Naive thymus-derived CD4-positive, alpha-beta T cell (primary cell): ENCODE measurements at regions of chr3 and their contacts with region 1.

Region 1: GRCh38 chr3:126475413-126476114 is at the start of gene ZXDC:
- DNase-seq: peak; percentile 85 to 95 (median 90)
- ATAC-seq: peak; percentile 89
- H3K4me3 ChIP-seq: peak within 1 kb of the TSS; percentile 89
- H3K4me3 Mint-ChIP-seq: peak within 1 kb of the TSS; percentile 81 to 97 (median 92)
- H3K27ac ChIP-seq: peak within 1 kb of the TSS; percentile 87
- H3K27ac Mint-ChIP-seq: peak within 1 kb of the TSS; percentile 82 to 96 (median 92)
- H3K4me1 ChIP-seq: peaks cover 29 to 34% of the 10 kb centered on the region in 2 donors
- H3K4me1 Mint-ChIP-seq: peaks cover 34 to 52% (median 48%) of the 10 kb centered on the region in 7 donors
- H3K27me3 ChIP-seq: no peaks in the 10 kb centered on the region
- H3K27me3 Mint-ChIP-seq: peaks cover 0 to 4% (median 0%) of the 10 kb centered on the region in 5 donors
- total RNA-seq, gene ZXDC: 33.7 to 71.9 (median 67.6) TPM

Region 2: GRCh38 chr3:124730129-124730940 is 1745.2 kb before region 1 on chr3 and contains the start of gene UMPS:
- CTCF ChIA-PET with region 1: no interaction called
- POLR2A ChIA-PET with region 1: interaction called, 3 read pairs
- intact Hi-C with region 1: loop called in 1 of 2 experiments (anchors 5 kb)
- DNase-seq: peak; percentile 85 to 94 (median 91)
- ATAC-seq: peak; percentile 97
- H3K4me3 ChIP-seq: peak within 1 kb of the TSS; percentile 78
- H3K4me3 Mint-ChIP-seq: peak within 1 kb of the TSS; percentile 93 to 100 (median 98)
- H3K27ac ChIP-seq: peak within 1 kb of the TSS; percentile 77
- H3K27ac Mint-ChIP-seq: peak within 1 kb of the TSS; percentile 96 to 100 (median 98)
- H3K4me1 ChIP-seq: peaks cover 11 to 32% of the 10 kb centered on the region in 2 donors
- H3K4me1 Mint-ChIP-seq: peaks cover 20 to 51% (median 48%) of the 10 kb centered on the region in 7 donors
- H3K27me3 ChIP-seq: peaks cover 0 to 4% of the 10 kb centered on the region in 2 donors
- H3K27me3 Mint-ChIP-seq: peaks cover 9 to 27% (median 19%) of the 10 kb centered on the region in 5 donors
- total RNA-seq, gene UMPS: 13.2 to 34.8 (median 24.8) TPM

Region 3: DNA sequence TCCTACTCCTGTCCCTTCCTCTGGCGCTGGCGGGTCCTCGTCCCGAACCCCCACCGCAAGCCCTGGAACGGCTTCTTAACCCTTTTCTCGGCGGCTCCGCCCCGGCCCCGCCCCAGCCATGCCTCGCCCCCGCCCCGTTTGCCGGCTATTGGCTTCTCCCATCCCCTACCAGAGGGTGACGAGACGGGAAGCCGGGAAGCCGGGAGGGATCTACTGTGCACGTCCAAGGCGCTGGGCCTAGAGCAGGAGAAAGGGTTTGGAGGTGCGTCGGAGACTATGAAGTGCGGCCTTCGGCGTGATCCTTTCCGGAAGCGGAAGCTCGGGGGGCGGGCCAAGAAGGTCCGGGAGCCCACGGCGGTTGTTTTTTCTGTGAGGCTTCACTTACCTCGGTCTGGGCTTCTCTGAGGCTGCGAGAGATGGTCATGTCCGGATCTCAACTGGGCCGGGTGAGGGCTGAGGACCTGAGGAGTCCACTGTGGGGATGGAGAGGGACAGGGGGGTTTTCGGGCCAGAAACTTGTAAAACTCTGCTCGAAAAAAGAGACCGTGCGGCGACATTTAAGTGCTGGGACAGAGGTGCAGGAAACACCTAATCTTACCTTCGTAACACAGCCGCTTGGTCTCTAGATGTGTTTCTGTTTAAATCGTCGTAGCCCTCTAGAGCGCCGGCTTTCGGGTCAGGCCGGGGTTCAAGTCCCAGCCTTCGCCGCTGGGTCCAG is 485.2 kb before region 1 on chr3:
- CTCF ChIA-PET with region 1: no interaction called
- POLR2A ChIA-PET with region 1: no interaction called
- intact Hi-C with region 1: loop called (anchors 1 to 2 kb)
- DNase-seq: peak in 8 of 9 donors; percentile 57 to 84 (median 73)
- ATAC-seq: peak; percentile 91
- H3K4me3 ChIP-seq: peak overlapping the region; percentile 80
- H3K4me3 Mint-ChIP-seq: peak overlapping the region; percentile 95 to 100 (median 98)
- H3K27ac ChIP-seq: peak overlapping the region; percentile 82
- H3K27ac Mint-ChIP-seq: peak overlapping the region; percentile 92 to 100 (median 98)
- H3K4me1 ChIP-seq: peaks cover 5 to 7% of the 10 kb centered on the region in 2 donors
- H3K4me1 Mint-ChIP-seq: peaks cover 10 to 41% (median 25%) of the 10 kb centered on the region in 7 donors
- H3K27me3 ChIP-seq: no peaks in the 10 kb centered on the region
- H3K27me3 Mint-ChIP-seq: peaks cover 0 to 23% (median 0%) of the 10 kb centered on the region in 5 donors

Region 4: GRCh38 chr3:126245811-126246727 is 229.5 kb before region 1 on chr3:
- CTCF ChIA-PET with region 1: no interaction called
- POLR2A ChIA-PET with region 1: no interaction called
- intact Hi-C with region 1: loop called in 1 of 2 experiments (anchors 1 kb)
- DNase-seq: no peak
- ATAC-seq: no peak
- H3K4me3 ChIP-seq: no peak overlapping the region
- H3K4me3 Mint-ChIP-seq: no peak overlapping the region
- H3K27ac ChIP-seq: no peak overlapping the region
- H3K27ac Mint-ChIP-seq: no peak overlapping the region
- H3K4me1 ChIP-seq: no peaks in the 10 kb centered on the region
- H3K4me1 Mint-ChIP-seq: no peaks in the 10 kb centered on the region
- H3K27me3 ChIP-seq: no peaks in the 10 kb centered on the region
- H3K27me3 Mint-ChIP-seq: peaks cover 3 to 33% (median 17%) of the 10 kb centered on the region in 5 donors

Region 5: GRCh38 chr3:126654571-126655383 is 179.2 kb after region 1 on chr3 and contains the start of gene TXNRD3:
- CTCF ChIA-PET with region 1: no interaction called
- POLR2A ChIA-PET with region 1: no interaction called
- intact Hi-C with region 1: loop called in 1 of 2 experiments (anchors 2 kb)
- DNase-seq: peak; percentile 52 to 76 (median 71)
- ATAC-seq: peak; percentile 93
- H3K4me3 ChIP-seq: peak within 1 kb of the TSS; percentile 46
- H3K4me3 Mint-ChIP-seq: peak within 1 kb of the TSS; percentile 83 to 93 (median 89)
- H3K27ac ChIP-seq: peak within 1 kb of the TSS; percentile 51
- H3K27ac Mint-ChIP-seq: peak within 1 kb of the TSS in 7 of 9 donors; percentile 18 to 91 (median 51)
- H3K4me1 ChIP-seq: peaks cover 0 to 3% of the 10 kb centered on the region in 2 donors
- H3K4me1 Mint-ChIP-seq: peaks cover 4 to 19% (median 10%) of the 10 kb centered on the region in 7 donors
- H3K27me3 ChIP-seq: peaks cover 0 to 4% of the 10 kb centered on the region in 2 donors
- H3K27me3 Mint-ChIP-seq: peaks cover 0 to 51% (median 4%) of the 10 kb centered on the region in 5 donors
- total RNA-seq, gene TXNRD3: 0.46 to 4.8 (median 3.2) TPM

Region 6: DNA sequence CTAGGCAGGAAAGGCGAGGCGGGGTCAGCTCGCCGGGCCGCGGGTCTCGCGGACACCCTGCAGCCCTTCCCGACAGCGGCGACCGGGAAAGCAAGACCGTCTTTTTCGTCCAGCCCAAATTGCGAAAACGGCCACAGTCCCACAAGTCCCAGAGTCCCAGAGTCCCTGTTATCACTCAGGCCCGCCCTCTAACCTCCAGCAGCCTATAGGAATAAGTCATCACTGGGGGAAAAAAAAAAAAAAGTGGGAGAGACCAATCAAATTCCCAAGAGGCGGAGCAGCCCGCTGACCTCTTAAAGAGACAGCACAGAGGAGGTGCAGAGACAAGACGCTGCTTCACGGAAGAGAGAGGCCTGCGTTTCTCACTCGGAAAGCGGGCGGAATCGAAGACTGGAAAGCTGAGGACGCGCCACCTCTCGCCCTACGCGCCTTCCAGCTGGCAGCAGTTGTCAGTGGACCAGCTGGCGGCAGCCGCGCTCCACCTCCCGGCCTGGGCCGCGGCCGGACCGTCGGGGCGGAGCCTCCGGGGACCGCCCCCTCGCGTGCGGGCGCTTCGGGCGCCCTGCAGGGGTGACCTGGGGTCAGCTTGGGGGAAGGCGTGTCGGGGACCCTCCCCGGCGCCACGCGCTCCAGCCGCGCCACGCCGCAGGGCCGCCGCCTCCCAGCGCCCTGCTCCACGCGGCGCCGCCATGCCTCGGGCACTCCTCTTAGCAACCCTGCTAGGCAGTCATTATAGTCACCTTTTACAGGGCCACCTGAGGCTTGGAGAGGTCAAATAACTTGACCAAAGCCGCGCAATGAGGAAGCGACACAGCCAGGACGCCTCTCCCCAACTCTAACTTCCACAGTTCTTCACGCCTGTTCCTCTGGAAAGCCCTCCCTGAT is 1115.3 kb after region 1 on chr3 and contains the start of gene TPRA1:
- CTCF ChIA-PET with region 1: no interaction called
- POLR2A ChIA-PET with region 1: interaction called, 3 read pairs
- intact Hi-C with region 1: loop called (anchors 1 to 2 kb)
- DNase-seq: peak; percentile 58 to 90 (median 85)
- ATAC-seq: peak; percentile 90
- H3K4me3 ChIP-seq: peak within 1 kb of the TSS; percentile 91
- H3K4me3 Mint-ChIP-seq: peak within 1 kb of the TSS; percentile 86 to 99 (median 96)
- H3K27ac ChIP-seq: peak within 1 kb of the TSS; percentile 80
- H3K27ac Mint-ChIP-seq: peak within 1 kb of the TSS; percentile 86 to 96 (median 94)
- H3K4me1 ChIP-seq: peaks cover 11 to 12% of the 10 kb centered on the region in 2 donors
- H3K4me1 Mint-ChIP-seq: peaks cover 14 to 51% (median 43%) of the 10 kb centered on the region in 7 donors
- H3K27me3 ChIP-seq: no peaks in the 10 kb centered on the region
- H3K27me3 Mint-ChIP-seq: no peaks in the 10 kb centered on the region
- total RNA-seq, gene TPRA1: 13.6 to 30.6 (median 24.5) TPM

Region 7: GRCh38 chr3:128123538-128124368 is 1648.2 kb after region 1 on chr3 and contains the start of gene RUVBL1:
- CTCF ChIA-PET with region 1: no interaction called
- POLR2A ChIA-PET with region 1: no interaction called
- intact Hi-C with region 1: loop called in 1 of 2 experiments (anchors 5 kb)
- DNase-seq: peak; percentile 85 to 99 (median 98)
- ATAC-seq: peak; percentile 97
- H3K4me3 ChIP-seq: peak within 1 kb of the TSS; percentile 83
- H3K4me3 Mint-ChIP-seq: peak within 1 kb of the TSS; percentile 82 to 100 (median 98)
- H3K27ac ChIP-seq: peak within 1 kb of the TSS; percentile 84
- H3K27ac Mint-ChIP-seq: peak within 1 kb of the TSS; percentile 95 to 99 (median 97)
- H3K4me1 ChIP-seq: peaks cover 13 to 15% of the 10 kb centered on the region in 2 donors
- H3K4me1 Mint-ChIP-seq: peaks cover 23 to 40% (median 27%) of the 10 kb centered on the region in 7 donors
- H3K27me3 ChIP-seq: no peaks in the 10 kb centered on the region
- H3K27me3 Mint-ChIP-seq: peaks cover 0 to under 1% (median 0%) of the 10 kb centered on the region in 5 donors
- total RNA-seq, gene RUVBL1: 16.8 to 59.3 (median 22.5) TPM